ENCODE measurements at regions of chr14 and their contacts with region 1.

Region 1: GRCh38 chr14:67240978-67241414 is 239 bp upstream of the PALS1 start:
- DNase-seq: peak; percentile 99
- H3K4me3 ChIP-seq: peak overlapping the region; percentile 79 to 99 (median 90)
- H3K27ac ChIP-seq: peak overlapping the region; percentile 82
- H3K4me1 ChIP-seq: peaks cover 13% of the 10 kb centered on the region
- H3K27me3 ChIP-seq: peaks cover 0 to 4% of the 10 kb centered on the region in 2 experiments
- CTCF ChIP-seq: no peak
- POLR2A ChIP-seq: peak; percentile 63

Region 2: GRCh38 chr14:66507722-66508546 is 733.1 kb before region 1 on chr14 and contains the start of gene GPHN:
- CTCF ChIA-PET with region 1: no interaction called
- POLR2A ChIA-PET with region 1: no interaction called
- dilution Hi-C with region 1: no loop called
- intact Hi-C with region 1: loop called (anchors 1 kb)
- DNase-seq: peak; percentile 99
- H3K4me3 ChIP-seq: peak within 1 kb of the TSS; percentile 85 to 97 (median 93)
- H3K27ac ChIP-seq: peak within 1 kb of the TSS; percentile 27
- H3K4me1 ChIP-seq: peaks cover 14% of the 10 kb centered on the region
- H3K27me3 ChIP-seq: peaks cover 0 to 2% of the 10 kb centered on the region in 2 experiments
- CTCF ChIP-seq: peak in 1 of 2 donors; percentile 5
- POLR2A ChIP-seq: peak; percentile 95
- total RNA-seq, gene GPHN: 18.7 and 23.2 TPM in 2 replicates

Region 3: GRCh38 chr14:67166450-67166853 is 74.5 kb before region 1 on chr14:
- CTCF ChIA-PET with region 1: no interaction called
- POLR2A ChIA-PET with region 1: no interaction called
- dilution Hi-C with region 1: no loop called
- intact Hi-C with region 1: loop called (anchors 2 kb)
- DNase-seq: peak; percentile 60
- H3K4me3 ChIP-seq: no peak overlapping the region
- H3K27ac ChIP-seq: no peak overlapping the region
- H3K4me1 ChIP-seq: no peaks in the 10 kb centered on the region
- H3K27me3 ChIP-seq: no peaks in the 10 kb centered on the region
- CTCF ChIP-seq: peak; percentile 53 to 60
- POLR2A ChIP-seq: no peak

Region 4: GRCh38 chr14:67343601-67344230 is 102.7 kb after region 1 on chr14:
- CTCF ChIA-PET with region 1: no interaction called
- POLR2A ChIA-PET with region 1: no interaction called
- dilution Hi-C with region 1: no loop called
- intact Hi-C with region 1: loop called (anchors 5 kb)
- DNase-seq: peak; percentile 35
- H3K4me3 ChIP-seq: no peak overlapping the region
- H3K27ac ChIP-seq: no peak overlapping the region
- H3K4me1 ChIP-seq: peaks cover 3% of the 10 kb centered on the region
- H3K27me3 ChIP-seq: no peaks in the 10 kb centered on the region
- CTCF ChIP-seq: no peak
- POLR2A ChIP-seq: no peak

Region 5: DNA sequence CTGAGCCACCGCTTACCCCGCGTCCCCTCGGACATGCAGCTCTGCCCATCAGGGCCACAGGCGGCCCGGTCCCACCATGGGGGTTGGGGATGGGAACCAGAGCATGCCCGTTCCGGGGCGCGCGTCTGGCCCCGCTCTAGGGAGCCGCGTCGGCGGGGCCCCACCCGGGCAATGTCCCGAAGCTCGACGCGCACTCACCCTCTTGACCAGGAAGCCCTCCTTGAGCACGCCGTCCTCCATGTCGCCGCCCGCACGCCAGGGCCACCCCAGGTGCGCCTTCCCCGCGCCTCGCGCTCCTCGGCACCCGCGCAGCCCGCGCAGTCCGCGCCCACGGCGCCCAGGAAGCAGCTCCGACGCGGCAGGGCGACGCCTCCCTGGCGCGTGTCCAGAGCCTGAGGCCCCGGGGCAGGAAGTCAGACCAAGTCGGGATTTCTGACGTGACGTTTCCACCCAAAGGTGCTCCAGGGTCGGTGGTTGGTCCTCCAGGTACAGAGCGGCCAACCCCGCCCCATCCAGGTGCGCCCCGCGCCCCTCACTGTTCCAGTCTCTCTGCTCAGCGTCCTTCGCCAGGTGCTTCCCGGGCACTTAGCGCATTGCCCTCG is 170.9 kb after region 1 on chr14 and contains the start of gene PLEK2:
- CTCF ChIA-PET with region 1: no interaction called
- POLR2A ChIA-PET with region 1: no interaction called
- dilution Hi-C with region 1: no loop called
- intact Hi-C with region 1: loop called (anchors 2 kb)
- DNase-seq: no peak
- H3K4me3 ChIP-seq: peak within 1 kb of the TSS in 1 of 3 experiments; percentile 28
- H3K27ac ChIP-seq: no peak within 1 kb of the TSS
- H3K4me1 ChIP-seq: peaks cover 19% of the 10 kb centered on the region
- H3K27me3 ChIP-seq: no peaks in the 10 kb centered on the region
- CTCF ChIP-seq: no peak
- POLR2A ChIP-seq: no peak
- total RNA-seq, gene PLEK2: 3.8 and 4.7 TPM in 2 replicates

Measured in endothelial cell of umbilical vein (primary cell).